ENCODE measurements at regions of chr3 and their contacts with region 1.

Region 1: DNA sequence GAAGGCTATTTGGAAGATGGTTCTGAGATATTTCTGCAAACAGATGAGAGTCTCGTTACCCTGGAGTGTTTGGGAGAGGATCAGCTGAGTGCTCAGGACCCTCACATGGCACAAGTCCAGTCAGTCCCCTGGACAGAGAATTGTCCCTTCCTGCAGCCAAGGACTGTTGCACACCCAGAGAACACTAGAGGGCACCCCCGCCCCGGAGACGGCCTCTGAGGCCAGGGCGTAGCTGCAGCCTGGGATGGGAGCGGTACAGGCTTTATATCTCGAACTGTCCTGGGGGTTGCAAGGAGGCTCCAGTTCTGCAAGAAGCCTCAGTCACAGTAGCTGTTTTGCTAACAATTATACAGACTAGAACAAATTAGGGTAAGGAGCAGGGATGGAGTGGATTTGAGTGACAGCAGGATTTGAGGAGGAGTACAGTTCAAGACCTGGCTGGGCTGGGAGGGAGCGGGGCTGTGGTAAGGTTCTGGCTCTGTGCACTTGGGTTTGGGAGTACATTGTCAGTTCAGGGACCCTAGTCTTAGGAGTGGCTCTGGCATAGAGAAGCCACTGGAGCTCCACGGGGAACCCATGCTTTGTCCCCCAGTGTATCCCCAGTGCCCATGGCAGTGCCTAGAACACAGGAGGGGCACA is 67.6 kb upstream of the HACD2 start:
- DNase-seq: peak; percentile 69
- ATAC-seq: peak; percentile 82
- H3K4me3 Mint-ChIP-seq: no peak overlapping the region
- H3K27ac Mint-ChIP-seq: no peak overlapping the region
- H3K4me1 Mint-ChIP-seq: no peaks in the 10 kb centered on the region
- H3K27me3 Mint-ChIP-seq: no peaks in the 10 kb centered on the region

Region 2: GRCh38 chr3:123547881-123548519 is 104.5 kb before region 1 on chr3:
- CTCF ChIA-PET with region 1: no interaction called
- POLR2A ChIA-PET with region 1: no interaction called
- intact Hi-C with region 1: no loop called
- DNase-seq: no peak
- ATAC-seq: no peak
- H3K4me3 Mint-ChIP-seq: no peak overlapping the region
- H3K27ac Mint-ChIP-seq: no peak overlapping the region
- H3K4me1 Mint-ChIP-seq: peaks cover 7% of the 10 kb centered on the region
- H3K27me3 Mint-ChIP-seq: no peaks in the 10 kb centered on the region

Region 3: GRCh38 chr3:123642182-123642956 is 10.1 kb before region 1 on chr3:
- CTCF ChIA-PET with region 1: interaction called, 20 read pairs
- POLR2A ChIA-PET with region 1: no interaction called
- intact Hi-C with region 1: no loop called
- DNase-seq: peak; percentile 84
- ATAC-seq: peak; percentile 97
- H3K4me3 Mint-ChIP-seq: no peak overlapping the region
- H3K27ac Mint-ChIP-seq: no peak overlapping the region
- H3K4me1 Mint-ChIP-seq: no peaks in the 10 kb centered on the region
- H3K27me3 Mint-ChIP-seq: no peaks in the 10 kb centered on the region

Region 4: GRCh38 chr3:123700791-123701722 is 48.6 kb after region 1 on chr3:
- CTCF ChIA-PET with region 1: interaction called, 7 read pairs
- POLR2A ChIA-PET with region 1: no interaction called
- intact Hi-C with region 1: loop called in 1 of 2 experiments (anchors 5 kb)
- DNase-seq: no peak
- ATAC-seq: no peak
- H3K4me3 Mint-ChIP-seq: no peak overlapping the region
- H3K27ac Mint-ChIP-seq: no peak overlapping the region
- H3K4me1 Mint-ChIP-seq: no peaks in the 10 kb centered on the region
- H3K27me3 Mint-ChIP-seq: no peaks in the 10 kb centered on the region